Activated B cell treated with CpG ODN at 0.5 μM for 24 hours (primary cell): ENCODE measurements at regions of chr17 and their contacts with region 1.

Region 1: DNA sequence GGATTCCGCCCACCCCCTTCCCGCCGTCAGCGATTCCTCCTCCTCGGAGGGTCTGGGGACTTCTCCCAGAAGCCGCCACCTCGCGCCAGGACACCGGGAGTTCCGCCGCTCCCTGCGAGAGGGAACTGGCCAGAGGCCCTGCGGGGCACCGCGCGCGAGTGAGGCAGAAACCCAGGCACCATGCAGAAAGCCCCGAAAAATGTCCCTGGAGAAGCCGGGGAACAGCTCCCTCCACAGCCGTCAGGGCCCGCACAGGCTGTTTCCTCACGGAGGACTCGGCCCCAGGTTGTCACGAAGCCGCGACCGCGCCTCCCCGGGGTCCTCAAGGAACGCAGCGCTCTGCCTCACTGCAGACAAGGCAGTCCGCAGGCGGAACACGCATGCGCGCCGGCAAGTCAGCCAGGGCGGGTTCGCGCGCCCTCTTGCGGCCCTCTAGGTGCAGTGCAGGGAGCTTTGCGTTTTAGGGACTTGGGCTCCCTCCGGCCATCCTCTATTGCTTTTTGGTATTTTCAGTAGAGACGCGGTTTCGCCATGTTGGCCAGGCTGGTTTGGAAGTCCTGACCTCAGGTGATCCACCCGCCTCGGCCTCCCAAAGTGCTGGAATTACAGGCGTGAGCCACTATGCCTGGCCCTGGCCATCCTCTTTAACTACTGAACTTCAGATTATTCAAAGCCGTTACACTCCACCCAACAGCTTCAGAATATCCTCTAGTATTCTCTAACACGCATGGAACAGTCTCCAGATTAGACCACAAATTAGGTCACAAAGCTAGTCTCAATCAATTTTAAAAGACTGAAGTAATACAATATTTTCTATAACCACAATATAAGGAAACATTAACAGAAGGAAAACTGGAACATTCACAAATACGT is 20.3 kb upstream of the ZNF287 start:
- DNase-seq: peak; percentile 89
- ATAC-seq: peak; percentile 97
- H3K4me3 Mint-ChIP-seq: peak overlapping the region; percentile 74
- H3K27ac Mint-ChIP-seq: no peak overlapping the region
- H3K4me1 Mint-ChIP-seq: peaks cover 5% of the 10 kb centered on the region
- H3K27me3 Mint-ChIP-seq: peaks cover 40% of the 10 kb centered on the region
- CTCF ChIP-seq: peak; percentile 75

Region 2: DNA sequence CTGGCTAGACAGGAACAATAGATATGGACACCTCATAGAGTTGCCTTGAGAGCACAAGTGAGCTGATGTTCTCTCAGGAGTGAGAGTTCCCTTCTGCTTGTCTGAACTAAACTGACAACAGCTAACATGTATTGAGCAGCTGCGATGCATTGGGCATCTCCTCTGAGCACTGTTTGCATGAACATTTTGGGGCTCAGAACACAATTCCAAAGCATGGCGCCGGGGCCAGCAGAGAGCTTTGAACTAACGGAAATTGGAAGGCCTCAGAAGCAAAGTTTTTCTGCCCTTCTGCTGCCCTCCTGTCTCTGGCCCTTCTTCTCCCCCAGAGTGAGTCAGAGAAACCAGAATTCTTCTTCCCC is 135.9 kb before region 1 on chr17:
- CTCF ChIA-PET with region 1: interaction called, 7 read pairs
- POLR2A ChIA-PET with region 1: no interaction called
- intact Hi-C with region 1: loop called (anchors 1 kb)
- DNase-seq: no peak
- ATAC-seq: no peak
- H3K4me3 Mint-ChIP-seq: no peak overlapping the region
- H3K27ac Mint-ChIP-seq: no peak overlapping the region
- H3K4me1 Mint-ChIP-seq: no peaks in the 10 kb centered on the region
- H3K27me3 Mint-ChIP-seq: no peaks in the 10 kb centered on the region
- CTCF ChIP-seq: no peak

Region 3: DNA sequence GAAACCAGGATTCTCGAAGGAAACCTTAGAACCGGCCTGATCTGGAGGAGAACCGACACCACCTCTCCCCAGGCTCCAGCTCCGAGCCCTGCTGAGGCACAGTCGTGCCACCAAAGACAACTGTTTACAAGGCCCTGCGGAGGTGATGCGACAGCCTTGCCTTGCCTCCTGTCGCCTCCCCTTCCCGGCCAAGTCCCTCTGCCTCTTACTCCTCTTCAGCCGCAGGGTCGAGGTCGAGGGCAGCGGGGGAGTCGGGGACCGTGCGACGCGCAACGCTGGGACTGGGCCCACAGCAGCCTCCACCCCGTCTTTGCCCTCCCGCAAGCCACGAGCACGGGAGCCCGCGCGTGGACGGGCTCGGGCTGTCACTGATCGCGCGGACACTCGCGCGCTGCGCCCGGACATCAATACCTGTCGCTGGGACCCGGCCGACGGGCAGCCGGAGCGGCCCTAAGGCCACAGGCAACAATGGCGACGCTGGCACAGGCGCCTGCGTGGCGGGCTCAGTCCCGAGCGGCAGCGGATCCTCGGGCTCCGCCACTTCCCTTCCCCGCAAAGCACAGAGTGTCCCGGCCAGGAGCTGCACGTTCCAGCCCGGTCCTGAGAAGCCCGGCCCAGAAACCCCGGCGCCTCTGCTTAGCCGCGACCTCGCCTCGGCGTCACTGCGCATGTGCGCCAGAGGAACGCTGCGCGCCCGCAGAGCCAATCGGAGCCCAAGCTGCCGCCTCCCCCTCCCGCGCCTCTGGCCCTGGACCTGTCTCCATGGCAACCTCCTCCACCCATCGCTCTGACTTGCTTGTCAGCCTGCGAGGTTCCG is 20.6 kb before region 1 on chr17 and contains the start of gene ZNF287:
- CTCF ChIA-PET with region 1: interaction called, 6 read pairs
- POLR2A ChIA-PET with region 1: interaction called, 6 read pairs
- intact Hi-C with region 1: loop called (anchors 1 kb)
- DNase-seq: peak; percentile 89
- ATAC-seq: peak; percentile 97
- H3K4me3 Mint-ChIP-seq: peak within 1 kb of the TSS; percentile 88
- H3K27ac Mint-ChIP-seq: peak within 1 kb of the TSS; percentile 94
- H3K4me1 Mint-ChIP-seq: peaks cover 14% of the 10 kb centered on the region
- H3K27me3 Mint-ChIP-seq: no peaks in the 10 kb centered on the region
- CTCF ChIP-seq: no peak
- total RNA-seq, gene ZNF287: 14.3 and 15.4 TPM in 2 replicates